ENCODE measurements at regions of chr17 and their contacts with region 1.

Region 1: DNA sequence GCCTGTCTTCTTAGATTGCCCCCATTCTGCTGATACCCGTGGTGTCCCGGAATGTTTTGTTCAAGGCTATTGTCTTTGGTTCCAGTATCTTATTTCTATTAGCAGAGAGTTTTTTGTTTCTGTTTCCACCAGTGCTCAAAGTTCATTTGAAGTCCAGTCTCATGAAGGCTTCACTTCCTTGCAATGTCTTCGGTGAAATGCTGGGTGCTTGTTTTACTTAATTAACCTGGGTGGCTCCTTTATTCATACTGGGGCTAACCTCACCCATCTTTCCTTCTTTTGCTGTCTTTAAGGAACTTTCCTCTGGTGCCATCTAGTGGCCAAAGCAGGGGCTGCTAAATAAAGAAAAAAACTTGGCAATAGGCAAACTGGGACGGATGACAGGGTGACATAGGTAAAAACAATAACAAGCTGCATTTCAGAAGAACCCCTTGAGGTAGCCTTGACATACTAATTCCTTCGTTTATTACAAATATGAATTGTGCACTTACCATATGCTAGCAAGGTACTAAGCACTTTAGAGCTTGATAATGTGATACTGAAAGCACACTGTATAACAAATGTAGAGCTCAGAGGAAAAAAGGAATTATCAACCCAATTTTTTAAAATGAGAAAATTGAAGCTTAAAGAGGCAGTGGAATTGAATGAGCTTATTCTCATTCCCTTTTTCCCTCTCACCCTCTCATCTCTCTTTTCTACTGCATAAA is 2.8 kb upstream of the SMIM36 start:
- DNase-seq: peak; percentile 87

Region 2: DNA sequence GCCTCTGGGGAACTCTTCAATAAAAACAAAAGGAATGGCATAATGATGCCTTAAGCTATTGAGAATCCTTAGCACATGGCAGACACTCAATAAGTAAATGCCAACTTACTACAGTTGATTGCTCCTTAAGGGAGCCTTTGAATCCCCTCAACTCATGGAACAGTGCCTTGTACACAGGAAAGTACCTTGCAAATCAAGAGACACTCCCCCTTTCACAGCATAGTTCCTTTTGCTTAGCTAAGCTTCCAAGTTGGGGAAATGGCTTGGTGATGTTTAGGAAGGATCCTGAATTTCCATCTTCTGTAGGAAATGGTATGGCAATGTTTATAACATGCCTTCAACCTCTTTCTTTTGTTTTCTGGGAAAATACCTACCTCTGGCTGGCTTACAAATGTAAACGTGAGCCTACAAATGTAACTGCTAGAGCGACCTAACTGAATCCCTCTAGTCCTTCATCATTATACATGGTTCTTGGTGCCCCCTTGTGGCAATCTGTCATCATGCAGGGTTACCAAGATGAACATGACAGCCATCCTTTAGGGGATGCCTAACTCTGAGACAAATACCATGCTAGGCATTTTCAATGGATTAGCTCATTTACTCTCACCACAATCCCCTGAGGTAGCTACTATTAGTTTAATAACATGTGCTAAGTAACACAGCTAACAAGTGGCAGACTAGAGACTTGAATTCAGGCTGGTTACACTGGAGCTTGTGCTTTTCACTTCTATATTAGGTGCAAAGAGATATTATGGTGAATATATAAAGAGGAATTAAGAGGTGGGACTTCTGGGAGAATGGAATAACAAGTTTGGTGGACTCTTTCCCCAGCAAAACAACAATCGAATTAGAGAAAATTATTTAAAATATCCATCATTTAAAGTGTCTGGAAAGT is 157.4 kb before region 1 on chr17:
- in situ Hi-C with region 1: loop called (anchors 25 kb)
- DNase-seq: peak; percentile 89

Region 3: GRCh38 chr17:55410722-55411462 is 103.1 kb before region 1 on chr17:
- in situ Hi-C with region 1: no loop called
- DNase-seq: no peak

Measured in SK-MEL-5 (cell line).